Dorsolateral prefrontal cortex (tissue), 120 donors: ENCODE measurements at regions of chr6 and their contacts with region 1.

Region 1: GRCh38 chr6:25278914-25279747 is at the start of gene CARMIL1:
- DNase-seq: peak; percentile 42 to 88 (median 77)
- H3K4me3 ChIP-seq: peak within 1 kb of the TSS; percentile 48 to 85 (median 74)
- H3K27ac ChIP-seq: peak within 1 kb of the TSS in 56 of 59 donors; percentile 12 to 89 (median 73)
- H3K27me3 ChIP-seq: peaks cover 0 to 44% (median 0%) of the 10 kb centered on the region in 45 donors
- CTCF ChIP-seq: peak; percentile 31 to 83 (median 67)
- total RNA-seq, gene CARMIL1: 19.0 to 86.8 (median 44.8) TPM

Region 2: DNA sequence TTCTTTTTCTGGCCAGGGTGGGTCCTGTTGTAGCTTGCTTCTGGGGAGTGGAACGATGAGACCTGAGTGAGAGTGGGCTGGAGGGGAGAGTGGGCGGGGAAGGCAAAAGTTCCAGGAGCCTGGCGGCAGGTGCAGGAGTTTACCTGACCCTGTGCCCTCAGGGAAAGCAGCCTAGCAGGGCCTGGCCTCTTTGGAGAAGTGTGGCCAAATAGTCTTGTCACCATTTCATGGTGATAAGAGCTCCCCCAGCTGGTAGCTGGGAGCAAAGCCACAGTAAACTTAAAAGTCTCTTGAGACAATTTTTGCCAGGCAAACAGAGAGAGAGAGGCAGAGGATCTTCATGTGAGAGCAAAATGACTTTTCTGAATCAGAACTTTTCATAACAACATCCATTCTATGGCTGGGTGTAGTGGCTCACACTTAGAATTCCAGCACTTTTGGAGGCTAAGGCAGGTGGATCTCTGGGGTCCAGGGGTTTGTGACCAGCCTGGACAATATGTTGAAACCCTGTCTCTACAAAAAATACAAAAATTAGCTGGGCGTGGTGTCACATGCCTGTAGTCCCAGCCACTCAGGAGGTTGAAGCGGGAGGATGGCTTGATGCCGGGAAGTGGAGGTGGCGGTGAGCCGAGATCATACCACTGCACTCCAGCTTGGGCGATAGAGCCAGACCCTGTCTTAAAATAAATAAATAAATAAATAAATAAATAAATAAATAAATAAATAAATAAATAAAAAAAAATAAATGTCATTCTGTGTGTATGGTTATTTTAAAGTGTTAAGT is 211.1 kb after region 1 on chr6:
- intact Hi-C with region 1: loop called (anchors 2 to 5 kb)
- DNase-seq: peak in 9 of 10 donors; percentile 35 to 70 (median 54)
- H3K4me3 ChIP-seq: no peak overlapping the region
- H3K27ac ChIP-seq: peak overlapping the region in 6 of 59 donors; percentile 6 to 48 (median 36)
- H3K27me3 ChIP-seq: peaks cover 0 to 9% (median 0%) of the 10 kb centered on the region in 45 donors
- CTCF ChIP-seq: peak; percentile 44 to 84 (median 69)

Region 3: GRCh38 chr6:25556516-25556915 is 277.4 kb after region 1 on chr6:
- intact Hi-C with region 1: loop called in 1 of 2 experiments (anchors 10 kb)
- DNase-seq: peak; percentile 54 to 88 (median 72)
- H3K4me3 ChIP-seq: no peak overlapping the region
- H3K27ac ChIP-seq: no peak overlapping the region
- H3K27me3 ChIP-seq: peaks cover 0 to 5% (median 0%) of the 10 kb centered on the region in 45 donors
- CTCF ChIP-seq: peak; percentile 64 to 92 (median 81)

Region 4: DNA sequence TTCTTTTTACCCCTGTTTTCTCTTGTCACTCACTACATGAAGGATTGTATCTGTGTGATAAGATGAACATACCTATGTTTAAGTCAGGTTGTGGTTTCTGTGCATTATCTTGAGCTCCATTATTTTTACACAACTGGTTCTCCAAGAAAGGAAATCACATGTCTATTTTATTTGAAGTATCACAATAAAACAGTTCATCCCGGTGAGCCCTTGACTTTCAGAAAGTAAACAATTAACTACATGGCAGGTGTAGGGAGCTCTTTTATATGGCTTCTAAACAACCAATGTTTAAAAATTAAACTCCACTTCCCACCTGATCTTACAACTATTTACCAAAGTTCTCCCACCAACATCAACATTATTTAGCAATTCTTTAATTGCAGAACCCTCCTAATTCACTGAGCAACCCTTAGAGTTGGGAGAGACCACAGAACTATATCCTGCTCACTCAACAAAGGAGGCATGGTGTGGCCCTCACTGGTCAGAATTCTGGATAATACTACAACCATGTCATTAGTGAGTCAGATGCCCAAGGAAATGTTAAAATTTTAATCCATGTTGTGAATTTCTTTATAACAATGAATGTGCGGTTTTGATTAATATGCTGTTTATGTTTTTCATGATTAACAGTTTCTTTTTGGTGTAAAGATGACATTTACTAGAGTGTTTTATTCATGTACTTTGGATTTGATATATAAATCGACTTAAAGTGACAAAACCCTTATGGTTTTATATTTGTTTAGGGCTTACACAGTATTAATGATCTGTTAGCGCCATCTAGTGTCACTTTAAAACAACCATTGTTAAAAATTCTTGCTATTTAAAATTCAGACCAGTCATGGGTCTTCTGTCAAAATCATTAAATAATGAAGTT is 322.9 kb after region 1 on chr6:
- intact Hi-C with region 1: loop called (anchors 5 kb)
- DNase-seq: no peak
- H3K4me3 ChIP-seq: no peak overlapping the region
- H3K27ac ChIP-seq: no peak overlapping the region
- H3K27me3 ChIP-seq: peaks cover 0 to 9% (median 0%) of the 10 kb centered on the region in 45 donors
- CTCF ChIP-seq: peak; percentile 52 to 89 (median 70)

Region 5: DNA sequence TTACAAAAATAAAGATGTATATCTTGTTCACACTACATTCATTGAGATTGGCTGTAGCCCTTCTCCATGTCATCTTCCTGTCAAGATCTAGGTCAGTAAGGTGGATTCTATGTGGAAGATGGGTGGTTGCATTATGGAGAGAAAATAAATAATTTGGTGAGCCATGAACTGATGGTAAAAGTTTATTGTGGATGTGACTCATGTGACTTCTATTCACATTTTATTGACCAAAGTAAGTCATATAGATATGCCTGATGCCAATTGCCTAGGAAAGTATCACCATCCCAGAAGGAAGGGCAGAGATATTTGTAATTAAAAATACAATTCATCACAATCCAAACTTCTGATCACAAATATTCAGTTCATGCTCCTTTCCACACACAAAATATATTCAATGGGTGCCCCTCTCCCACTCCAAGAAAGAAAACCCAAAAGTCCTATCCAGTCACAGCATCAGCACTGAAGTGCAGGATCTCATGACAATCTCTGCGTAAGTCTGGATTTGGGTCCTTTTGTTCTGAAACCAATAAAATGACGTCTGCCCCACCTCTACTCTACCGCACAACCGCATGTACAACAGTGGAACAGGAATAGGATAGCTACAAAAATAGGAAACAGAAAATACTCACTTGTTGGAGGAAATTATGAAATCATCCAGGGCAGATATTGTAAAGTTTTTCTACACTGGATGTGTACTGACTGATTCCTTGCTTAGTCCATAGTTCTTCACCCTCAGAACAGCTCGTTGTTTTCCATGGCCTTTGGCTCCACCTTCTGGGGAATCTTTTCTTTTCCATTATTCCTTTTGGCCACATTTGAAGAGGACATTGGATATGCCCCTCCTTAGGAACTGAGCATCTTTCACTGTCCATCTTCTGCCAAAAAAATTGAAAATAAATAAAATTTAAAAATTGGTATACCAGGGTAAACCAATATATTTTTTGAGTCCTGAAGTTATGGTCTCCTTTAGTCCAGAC is 611.0 kb after region 1 on chr6:
- intact Hi-C with region 1: loop called in 1 of 2 experiments (anchors 10 kb)
- DNase-seq: peak in 1 of 10 donors; percentile 13
- H3K4me3 ChIP-seq: no peak overlapping the region
- H3K27ac ChIP-seq: no peak overlapping the region
- H3K27me3 ChIP-seq: no peaks in the 10 kb centered on the region
- CTCF ChIP-seq: peak; percentile 22 to 82 (median 62)